Endothelial cell of umbilical vein (primary cell): ENCODE measurements at regions of chr18 and their contacts with region 1.

Region 1: DNA sequence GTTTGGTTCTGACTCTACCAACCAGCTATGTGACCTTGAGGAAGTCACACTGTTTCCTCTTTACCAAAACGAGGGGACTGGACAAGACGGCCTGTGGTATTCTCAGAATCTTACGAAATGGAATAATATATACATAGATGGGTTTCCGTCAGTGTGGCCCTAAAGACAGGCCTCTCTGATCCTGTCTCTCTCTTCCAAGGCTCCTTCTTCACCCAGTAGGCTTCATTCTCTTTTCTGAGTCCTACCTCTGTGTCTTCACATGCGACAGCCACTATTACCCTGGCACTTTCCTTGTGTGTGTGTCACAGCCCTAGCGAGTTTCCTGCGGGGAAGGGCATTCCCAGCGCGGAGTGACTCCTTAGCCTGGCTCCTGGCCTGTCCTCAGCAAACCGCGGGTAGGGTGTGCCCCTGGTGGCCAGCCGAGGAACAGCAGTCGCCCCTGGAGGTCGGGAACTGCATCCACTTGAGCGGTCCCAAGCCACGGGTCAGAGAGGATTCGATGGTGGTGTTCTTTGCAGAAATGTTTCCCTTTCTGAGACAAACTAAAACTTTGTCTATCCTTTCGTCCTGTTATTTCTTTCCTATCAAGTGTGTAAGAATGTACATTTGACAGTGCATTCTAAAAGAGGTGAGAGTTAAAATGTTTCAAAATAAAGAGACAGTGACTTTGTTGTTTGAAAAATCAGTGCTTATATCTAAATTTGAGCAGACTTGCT is 63.3 kb downstream of the RAB31 start:
- DNase-seq: peak; percentile 81
- H3K4me3 ChIP-seq: no peak overlapping the region
- H3K27ac ChIP-seq: peak overlapping the region; percentile 14
- H3K4me1 ChIP-seq: peaks cover 4% of the 10 kb centered on the region
- H3K27me3 ChIP-seq: no peaks in the 10 kb centered on the region
- CTCF ChIP-seq: peak; percentile 97 to 99
- POLR2A ChIP-seq: no peak

Region 2: DNA sequence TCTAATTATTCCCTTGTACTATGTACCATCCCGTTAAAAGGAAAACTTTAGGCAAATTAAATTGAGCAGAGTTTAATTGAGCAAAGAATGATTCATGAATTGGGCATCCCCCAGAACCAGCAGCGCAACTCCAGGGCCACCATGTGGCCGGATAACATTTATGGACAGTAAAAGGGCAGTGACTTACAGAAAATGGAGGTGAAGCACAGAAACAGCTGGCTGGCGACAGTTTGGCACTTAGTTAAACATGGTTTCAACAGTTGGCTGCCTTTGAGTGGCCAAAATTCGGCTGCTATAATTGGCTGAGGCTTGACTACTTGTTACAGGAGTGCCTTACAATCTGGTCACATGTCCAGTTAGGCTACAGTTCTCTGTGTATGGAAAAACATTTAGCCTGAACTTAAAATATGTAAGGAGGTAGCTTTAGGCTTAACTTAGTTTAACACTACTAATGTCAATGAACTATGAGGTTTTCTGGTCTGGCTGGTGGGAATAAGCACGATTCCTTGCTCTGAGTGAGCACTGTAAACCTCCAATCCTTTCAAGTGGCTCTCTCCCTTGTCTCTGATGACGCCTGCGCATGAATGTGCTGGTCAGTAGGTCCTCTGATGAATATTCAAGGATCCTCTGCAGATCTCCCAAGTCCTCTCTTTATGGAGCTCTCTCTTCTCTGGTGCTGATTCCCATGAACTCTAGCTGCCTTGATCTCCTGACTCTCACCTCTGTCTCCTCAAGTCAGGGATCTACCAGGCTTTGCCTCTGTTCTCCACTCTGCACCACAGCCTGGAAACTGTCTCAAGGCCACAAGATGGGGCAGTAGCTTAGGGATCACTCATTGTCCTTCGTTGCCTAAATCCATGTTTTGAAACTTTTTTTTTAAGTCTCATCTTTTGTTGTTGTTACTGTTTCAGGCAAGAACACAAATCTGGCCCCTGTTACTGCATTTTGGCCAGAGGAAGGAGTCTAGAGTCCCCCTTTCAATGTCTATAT is 87.7 kb before region 1 on chr18:
- CTCF ChIA-PET with region 1: interaction called, 7 read pairs
- POLR2A ChIA-PET with region 1: no interaction called
- dilution Hi-C with region 1: no loop called
- intact Hi-C with region 1: loop called (anchors 1 kb)
- DNase-seq: peak; percentile 68
- H3K4me3 ChIP-seq: no peak overlapping the region
- H3K27ac ChIP-seq: no peak overlapping the region
- H3K4me1 ChIP-seq: no peaks in the 10 kb centered on the region
- H3K27me3 ChIP-seq: no peaks in the 10 kb centered on the region
- CTCF ChIP-seq: peak; percentile 30 to 44
- POLR2A ChIP-seq: no peak

Region 3: GRCh38 chr18:9708057-9708433 is 63.4 kb before region 1 on chr18 and contains the start of gene RAB31:
- CTCF ChIA-PET with region 1: interaction called, 4 read pairs
- POLR2A ChIA-PET with region 1: no interaction called
- dilution Hi-C with region 1: no loop called
- intact Hi-C with region 1: loop called (anchors 1 kb)
- DNase-seq: peak; percentile 67
- H3K4me3 ChIP-seq: peak within 1 kb of the TSS; percentile 79 to 98 (median 91)
- H3K27ac ChIP-seq: peak within 1 kb of the TSS; percentile 70
- H3K4me1 ChIP-seq: peaks cover 23% of the 10 kb centered on the region
- H3K27me3 ChIP-seq: no peaks in the 10 kb centered on the region
- CTCF ChIP-seq: no peak
- POLR2A ChIP-seq: peak; percentile 52
- total RNA-seq, gene RAB31: 27.9 and 30.5 TPM in 2 replicates

Region 4: GRCh38 chr18:9951022-9951859 is 179.8 kb after region 1 on chr18:
- CTCF ChIA-PET with region 1: no interaction called
- POLR2A ChIA-PET with region 1: no interaction called
- dilution Hi-C with region 1: no loop called
- intact Hi-C with region 1: loop called (anchors 5 kb)
- DNase-seq: peak; percentile 75
- H3K4me3 ChIP-seq: no peak overlapping the region
- H3K27ac ChIP-seq: no peak overlapping the region
- H3K4me1 ChIP-seq: no peaks in the 10 kb centered on the region
- H3K27me3 ChIP-seq: no peaks in the 10 kb centered on the region
- CTCF ChIP-seq: peak; percentile 63 to 68
- POLR2A ChIP-seq: no peak